Dorsolateral prefrontal cortex (tissue), 120 donors: ENCODE measurements at regions of chr14 and their contacts with region 1.

Region 1: GRCh38 chr14:62006116-62006731 is 244.0 kb downstream of the SNAPC1 start:
- DNase-seq: no peak
- H3K4me3 ChIP-seq: peak overlapping the region in 2 of 59 donors; percentile 10 to 28
- H3K27ac ChIP-seq: peak overlapping the region in 22 of 59 donors; percentile 5 to 48 (median 24)
- H3K27me3 ChIP-seq: no peaks in the 10 kb centered on the region
- CTCF ChIP-seq: no peak

Region 2: DNA sequence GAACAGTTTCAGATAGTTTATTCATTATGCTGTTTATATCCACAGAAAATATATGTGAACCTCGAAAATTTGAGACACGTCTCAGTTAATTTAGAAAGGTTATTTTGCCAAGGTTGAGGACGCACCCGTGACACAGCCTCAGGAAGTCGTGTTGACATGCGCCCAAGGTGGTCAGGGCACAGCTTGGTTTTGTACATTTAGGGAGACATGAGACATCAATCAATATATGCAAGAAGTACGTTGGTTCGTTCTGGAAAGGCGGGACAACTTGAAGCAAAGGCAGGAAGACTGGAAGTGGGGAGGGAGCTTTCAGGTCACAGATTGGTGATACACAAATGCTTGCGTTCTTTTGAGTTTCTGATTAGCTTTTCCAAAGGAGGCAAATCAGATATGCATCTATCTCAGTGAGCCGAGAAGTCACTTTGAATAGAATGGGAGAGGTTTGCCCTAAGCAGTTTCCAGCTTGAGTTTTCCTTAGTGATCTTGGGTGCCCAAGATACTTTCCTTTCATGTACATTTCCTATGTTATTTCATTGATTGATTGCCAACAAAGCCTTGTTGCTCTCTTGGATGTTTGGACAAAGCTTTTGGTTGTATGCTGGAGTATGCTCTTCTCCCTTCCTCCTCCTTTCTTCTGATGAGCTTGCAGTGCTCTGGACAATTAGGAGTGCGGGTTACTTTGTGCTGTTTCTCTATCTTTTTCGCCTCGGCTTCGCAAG is 240.8 kb before region 1 on chr14:
- intact Hi-C with region 1: no loop called
- DNase-seq: no peak
- H3K4me3 ChIP-seq: no peak overlapping the region
- H3K27ac ChIP-seq: no peak overlapping the region
- H3K27me3 ChIP-seq: no peaks in the 10 kb centered on the region
- CTCF ChIP-seq: no peak

Region 3: DNA sequence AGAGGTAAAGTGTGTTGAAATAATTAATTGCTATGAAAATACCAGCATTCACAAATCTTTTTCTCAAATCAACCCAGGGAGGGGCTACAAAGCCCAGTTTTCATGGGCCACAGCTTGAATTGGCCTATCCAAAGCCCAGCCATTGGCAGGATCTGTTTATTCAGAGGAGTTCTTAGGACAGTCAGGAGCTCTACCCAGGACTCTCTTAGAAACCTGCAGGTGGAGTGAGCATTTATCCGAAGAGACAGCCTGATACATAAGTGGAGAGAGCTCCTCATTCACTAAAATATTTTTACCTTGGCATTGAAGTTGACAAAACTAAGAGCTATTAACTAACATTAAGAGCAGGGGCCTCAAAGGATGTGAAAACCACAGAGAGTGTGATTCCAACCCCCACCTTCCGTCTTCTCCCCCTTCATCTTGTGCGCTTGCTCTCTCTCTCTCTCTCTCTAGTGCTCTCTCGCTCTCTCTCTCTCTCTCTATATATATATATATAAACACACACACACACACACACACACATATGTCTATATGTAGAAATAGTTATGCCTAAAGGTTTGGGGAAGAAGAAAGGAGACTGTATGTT is 71.5 kb after region 1 on chr14:
- intact Hi-C with region 1: loop called in 1 of 2 experiments (anchors 2 kb)
- DNase-seq: no peak
- H3K4me3 ChIP-seq: no peak overlapping the region
- H3K27ac ChIP-seq: no peak overlapping the region
- H3K27me3 ChIP-seq: no peaks in the 10 kb centered on the region
- CTCF ChIP-seq: no peak